OCI-LY7 (cell line): ENCODE measurements at regions of chr5 and their contacts with region 1.

Region 1: GRCh38 chr5:91225848-91226686 is 157.1 kb downstream of the ARRDC3 start:
- DNase-seq: peak; percentile 67
- H3K4me3 ChIP-seq: no peak overlapping the region
- H3K27ac ChIP-seq: no peak overlapping the region
- H3K4me1 ChIP-seq: no peaks in the 10 kb centered on the region
- CTCF ChIP-seq: peak; percentile 81

Region 2: GRCh38 chr5:91101600-91102379 is 124.3 kb before region 1 on chr5:
- CTCF ChIA-PET with region 1: no interaction called
- POLR2A ChIA-PET with region 1: no interaction called
- intact Hi-C with region 1: loop called (anchors 5 kb)
- DNase-seq: peak; percentile 56
- H3K4me3 ChIP-seq: no peak overlapping the region
- H3K27ac ChIP-seq: no peak overlapping the region
- H3K4me1 ChIP-seq: no peaks in the 10 kb centered on the region
- CTCF ChIP-seq: peak; percentile 77

Region 3: DNA sequence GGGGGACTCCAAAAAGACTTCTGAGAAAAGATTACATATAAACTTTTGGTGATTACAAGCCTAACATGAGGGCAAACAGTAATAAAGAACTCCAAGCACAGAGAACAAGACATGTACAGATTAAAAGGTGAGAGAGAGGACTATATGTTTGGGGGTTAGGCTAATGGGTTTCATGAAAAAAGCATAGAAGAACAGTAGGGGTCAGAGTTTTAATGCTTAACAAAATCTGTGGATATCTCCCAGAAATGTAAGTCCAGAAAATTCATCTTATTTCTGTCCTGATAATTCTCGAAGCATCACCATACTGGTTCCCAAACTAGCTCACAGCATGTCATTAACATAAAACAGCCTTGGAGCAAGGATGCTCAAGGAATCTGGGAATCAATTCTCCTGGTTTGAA is 19.8 kb after region 1 on chr5:
- CTCF ChIA-PET with region 1: no interaction called
- POLR2A ChIA-PET with region 1: no interaction called
- intact Hi-C with region 1: no loop called
- DNase-seq: no peak
- H3K4me3 ChIP-seq: no peak overlapping the region
- H3K27ac ChIP-seq: no peak overlapping the region
- H3K4me1 ChIP-seq: no peaks in the 10 kb centered on the region
- CTCF ChIP-seq: 0 out of 2 replicates have a peak, but pooled peaks have one; percentile 20